B cell (primary cell): ENCODE measurements at regions of chr17 and their contacts with region 1.

Region 1: DNA sequence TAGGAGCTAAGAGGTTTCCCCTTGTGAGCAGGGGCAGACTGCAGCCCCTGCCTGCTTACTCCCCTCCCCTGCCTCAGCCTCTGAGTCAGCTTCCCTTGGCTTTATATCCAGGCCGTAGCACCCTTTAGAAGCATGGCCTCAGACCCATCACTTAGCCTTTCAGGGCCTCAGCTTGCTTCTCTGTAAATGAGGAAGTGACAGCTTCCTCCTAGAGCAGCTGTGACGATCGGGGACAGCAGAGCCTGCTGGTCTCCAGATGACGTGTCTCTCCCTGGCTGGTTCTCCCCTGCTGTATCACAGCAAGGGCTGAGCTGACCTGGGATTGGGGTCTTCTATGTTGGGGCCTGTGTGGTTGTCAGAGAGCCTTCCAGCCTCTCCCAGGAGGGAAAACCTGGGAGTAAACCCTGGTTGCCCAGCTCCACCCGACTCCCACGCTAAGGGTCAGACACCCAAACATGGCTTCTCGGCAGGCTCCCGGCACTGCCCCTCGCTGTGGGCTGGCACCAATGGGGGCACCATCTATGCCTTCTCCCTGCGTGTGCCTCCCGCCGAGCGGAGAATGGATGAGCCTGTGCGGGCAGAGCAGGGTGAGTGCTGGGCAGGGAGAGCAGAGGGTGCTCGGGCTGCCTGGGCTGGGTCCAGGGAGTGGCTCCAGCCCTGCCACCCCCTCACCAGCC is 16.3 kb upstream of the MYO15B start:
- DNase-seq: peak; percentile 88
- ATAC-seq: peak; percentile 97
- H3K4me3 ChIP-seq: peak overlapping the region in 2 of 5 experiments; percentile 28 to 35
- H3K4me3 Mint-ChIP-seq: peak overlapping the region; percentile 71
- H3K27ac ChIP-seq: peak overlapping the region; percentile 80 to 93
- H3K27ac Mint-ChIP-seq: peak overlapping the region; percentile 96
- H3K4me1 ChIP-seq: peaks cover 24 to 28% of the 10 kb centered on the region in 2 donors
- H3K4me1 Mint-ChIP-seq: peaks cover 23% of the 10 kb centered on the region
- H3K27me3 ChIP-seq: no peaks in the 10 kb centered on the region
- H3K27me3 Mint-ChIP-seq: no peaks in the 10 kb centered on the region
- CTCF ChIP-seq: no peak

Region 2: GRCh38 chr17:75531730-75532090 is 39.6 kb before region 1 on chr17:
- CTCF ChIA-PET with region 1: no interaction called
- POLR2A ChIA-PET with region 1: interaction called, 15 read pairs
- intact Hi-C with region 1: no loop called
- DNase-seq: no peak
- ATAC-seq: no peak
- H3K4me3 ChIP-seq: no peak overlapping the region
- H3K4me3 Mint-ChIP-seq: no peak overlapping the region
- H3K27ac ChIP-seq: no peak overlapping the region
- H3K27ac Mint-ChIP-seq: no peak overlapping the region
- H3K4me1 ChIP-seq: peaks cover 9 to 15% of the 10 kb centered on the region in 2 donors
- H3K4me1 Mint-ChIP-seq: peaks cover 10% of the 10 kb centered on the region
- H3K27me3 ChIP-seq: peaks cover 0 to 2% (median 0%) of the 10 kb centered on the region in 4 experiments
- H3K27me3 Mint-ChIP-seq: no peaks in the 10 kb centered on the region
- CTCF ChIP-seq: no peak